H1 (cell line): ENCODE measurements at regions of chr5 and their contacts with region 1.

Region 1: DNA sequence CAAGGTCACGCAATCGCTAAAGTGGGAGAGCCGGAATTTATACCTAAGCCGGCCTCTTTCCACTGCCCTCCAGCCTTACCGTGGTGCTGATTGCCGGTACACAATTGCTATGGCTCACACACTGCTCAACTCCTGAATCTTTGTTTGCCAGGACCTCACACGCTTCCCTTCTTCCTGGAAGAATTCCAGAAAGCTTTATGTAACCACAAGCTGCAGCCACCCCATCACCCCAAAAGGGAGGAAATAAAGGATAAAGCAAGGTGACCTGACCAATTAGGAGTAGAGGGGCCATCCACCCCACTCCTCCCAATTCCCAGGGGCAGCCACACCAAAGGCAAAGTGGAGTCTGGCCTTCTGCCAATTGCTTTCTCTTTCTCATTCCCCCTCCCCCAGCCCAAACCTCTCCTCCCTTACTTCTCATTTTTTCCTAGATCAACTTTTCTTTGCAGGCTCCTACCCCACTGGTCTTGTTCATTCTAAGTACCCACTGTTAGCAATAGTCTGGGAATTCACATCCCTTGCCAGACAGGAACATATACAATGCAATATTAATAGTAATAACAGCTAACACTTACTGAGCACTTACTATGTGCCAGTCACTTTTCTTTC is 18.0 kb upstream of the CDC23 start:
- DNase-seq: no peak
- H3K4me3 ChIP-seq: no peak overlapping the region
- H3K27ac ChIP-seq: no peak overlapping the region
- H3K4me1 ChIP-seq: no peaks in the 10 kb centered on the region
- H3K27me3 ChIP-seq: no peaks in the 10 kb centered on the region
- CTCF ChIP-seq: no peak
- EP300 ChIP-seq: no peak
- POLR2A ChIP-seq: no peak
- RAD21 ChIP-seq: no peak

Region 2: DNA sequence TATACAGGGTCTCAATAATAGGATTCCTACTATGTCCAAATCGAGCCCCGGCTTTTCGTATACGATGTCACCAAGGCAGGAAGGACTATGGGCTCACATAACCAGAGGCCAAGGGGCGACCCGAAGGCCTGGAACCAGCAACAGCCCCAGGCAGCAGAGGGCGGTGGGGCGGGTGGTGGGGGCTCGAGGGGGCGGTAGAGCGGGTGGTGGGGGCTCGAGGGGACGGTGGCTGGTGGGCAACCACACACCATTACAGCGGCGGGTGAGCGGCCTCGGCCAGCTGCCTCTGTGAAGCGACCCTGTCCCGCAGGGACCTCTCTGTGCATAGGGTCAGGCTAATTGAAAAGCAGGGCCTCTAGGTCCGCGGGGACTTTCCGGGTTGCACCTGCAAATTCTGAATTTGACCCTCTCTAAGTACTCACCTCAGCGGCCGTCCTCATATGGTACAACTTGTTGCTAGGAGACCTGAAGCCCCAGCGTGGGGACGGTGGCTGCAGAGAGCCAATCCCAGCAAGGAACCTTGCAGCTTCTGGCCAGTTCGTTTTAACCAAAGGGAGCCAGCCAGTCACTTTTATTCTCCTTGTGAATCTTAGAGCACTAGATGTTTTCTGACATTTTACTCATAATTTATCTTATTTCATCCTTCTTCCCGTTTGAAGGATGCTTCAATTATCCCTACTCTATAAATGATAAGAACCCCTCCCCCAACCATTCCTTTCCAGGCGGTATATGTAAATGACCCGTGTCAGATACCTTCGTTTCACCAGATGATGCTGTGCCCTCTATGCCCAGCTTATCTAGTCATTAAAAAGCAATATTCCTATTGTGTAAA is 91.9 kb before region 1 on chr5 and contains the start of gene NME5:
- CTCF ChIA-PET with region 1: no interaction called
- POLR2A ChIA-PET with region 1: no interaction called
- DNase-seq: peak; percentile 43 to 83
- H3K4me3 ChIP-seq: peak within 1 kb of the TSS; percentile 59 to 78 (median 66)
- H3K27ac ChIP-seq: no peak within 1 kb of the TSS
- H3K4me1 ChIP-seq: no peaks in the 10 kb centered on the region; a peak in 1 of 7 replicates
- H3K27me3 ChIP-seq: no peaks in the 10 kb centered on the region
- CTCF ChIP-seq: no peak
- EP300 ChIP-seq: no peak
- POLR2A ChIP-seq: no peak
- RAD21 ChIP-seq: no peak
- total RNA-seq, gene NME5: 0.63 and 0.89 TPM in 2 replicates

Region 3: DNA sequence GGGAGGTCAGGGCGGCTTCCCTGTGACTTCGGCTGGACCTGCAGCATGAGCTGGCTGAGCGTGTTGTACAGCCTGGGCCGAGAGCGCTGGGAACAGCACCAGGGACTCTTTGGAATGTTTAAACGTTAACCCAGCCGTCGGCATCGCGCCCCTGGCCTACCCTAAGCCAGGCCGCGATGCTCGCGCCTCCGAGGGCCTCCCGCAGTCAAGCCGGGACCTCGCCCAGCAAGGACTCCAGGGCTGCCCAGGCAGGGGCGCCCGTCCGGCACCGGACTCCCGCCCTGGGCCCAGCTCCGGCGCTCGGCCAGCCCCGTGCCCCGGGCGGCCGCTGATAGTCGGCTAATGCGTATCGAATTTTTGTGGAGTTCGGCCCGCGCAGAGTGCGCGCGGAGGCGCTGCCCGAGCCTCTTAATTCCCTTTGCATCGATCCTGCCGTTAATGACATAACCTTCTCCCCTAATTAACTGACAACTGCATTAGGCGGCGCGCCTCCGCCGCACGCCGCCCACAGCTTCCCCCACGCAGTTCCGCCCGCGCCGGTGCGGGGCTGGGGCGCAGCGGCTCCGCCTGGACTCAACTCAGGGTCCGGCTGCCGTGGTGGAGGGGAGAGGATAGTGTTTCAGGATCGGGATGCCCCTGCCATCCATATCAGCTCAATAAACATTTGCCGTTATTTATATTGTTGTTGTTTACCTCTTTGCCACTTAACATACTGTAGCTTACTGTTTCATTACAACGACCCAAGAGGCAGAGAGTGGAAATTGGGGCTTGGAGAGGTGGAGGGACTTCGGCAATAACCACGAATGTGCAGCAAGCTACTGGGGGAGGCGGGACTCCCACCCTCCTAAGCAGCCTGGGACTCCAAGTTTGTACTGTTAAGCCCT is 10.8 kb after region 1 on chr5:
- CTCF ChIA-PET with region 1: interaction called, 112 read pairs
- POLR2A ChIA-PET with region 1: interaction called, 5 read pairs
- DNase-seq: peak in 1 of 2 experiments; percentile 70
- H3K4me3 ChIP-seq: peak overlapping the region; percentile 29 to 61 (median 45)
- H3K27ac ChIP-seq: no peak overlapping the region
- H3K4me1 ChIP-seq: peaks cover 0 to 6% (median 4%) of the 10 kb centered on the region in 4 experiments; a peak in 5 of 7 replicates
- H3K27me3 ChIP-seq: peaks cover 9 to 26% (median 23%) of the 10 kb centered on the region in 4 experiments
- CTCF ChIP-seq: no peak
- EP300 ChIP-seq: no peak
- POLR2A ChIP-seq: no peak
- RAD21 ChIP-seq: no peak

Region 4: DNA sequence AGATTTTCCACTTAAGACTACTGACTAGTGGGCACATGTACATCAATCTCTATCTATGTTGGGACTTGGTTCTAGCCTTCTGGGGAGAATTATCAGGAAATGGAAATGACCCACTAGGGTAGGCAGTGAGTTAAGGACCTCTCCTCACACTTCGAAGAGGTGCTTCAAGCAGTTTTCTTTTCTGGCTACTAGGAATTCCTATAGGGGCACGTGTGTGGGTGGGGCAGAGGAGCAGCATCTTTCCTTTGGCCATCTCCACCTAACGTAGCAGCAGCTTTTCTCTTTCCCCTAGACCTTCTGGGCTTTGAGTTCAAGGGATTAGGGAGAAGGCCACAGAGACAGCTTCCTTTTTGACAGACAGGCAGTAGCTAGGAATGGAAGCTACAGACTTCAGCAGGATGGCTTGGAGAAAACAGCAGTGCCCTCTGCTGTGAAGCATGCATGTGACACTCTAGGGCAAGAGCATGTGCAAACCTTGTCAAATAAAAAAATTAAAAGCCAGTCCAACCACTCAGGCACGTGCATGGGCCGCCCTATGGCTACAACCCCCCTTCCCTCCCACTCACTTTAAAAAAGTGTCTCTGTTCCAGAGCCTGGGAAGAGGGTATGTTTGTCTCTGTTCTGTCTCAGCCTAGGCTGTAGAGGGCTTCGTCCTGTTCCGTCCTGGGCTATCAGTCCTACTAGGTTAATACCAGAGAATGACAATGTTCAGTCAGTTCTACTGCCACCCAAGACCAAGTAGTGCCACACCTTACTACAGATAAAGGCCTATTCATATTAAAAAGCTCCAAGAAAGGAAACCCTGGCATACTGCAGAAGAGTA is 52.0 kb after region 1 on chr5:
- CTCF ChIA-PET with region 1: interaction called, 128 read pairs
- POLR2A ChIA-PET with region 1: no interaction called
- DNase-seq: no peak
- H3K4me3 ChIP-seq: no peak overlapping the region
- H3K27ac ChIP-seq: no peak overlapping the region
- H3K4me1 ChIP-seq: no peaks in the 10 kb centered on the region
- H3K27me3 ChIP-seq: no peaks in the 10 kb centered on the region
- CTCF ChIP-seq: peak; percentile 47 to 78 (median 75)
- EP300 ChIP-seq: no peak
- POLR2A ChIP-seq: no peak
- RAD21 ChIP-seq: peak; percentile 83 to 88